ENCODE measurements at regions of chr9 and their contacts with region 1.

Region 1: GRCh38 chr9:96856363-96857286 is 2.3 kb upstream of the ZNF782 start:
- DNase-seq: peak in 1 of 2 experiments; percentile 74
- H3K4me3 ChIP-seq: no peak overlapping the region
- H3K27ac ChIP-seq: no peak overlapping the region
- H3K4me1 ChIP-seq: peaks cover 0 to 16% (median 9%) of the 10 kb centered on the region in 4 experiments; a peak in 5 of 7 replicates
- H3K27me3 ChIP-seq: no peaks in the 10 kb centered on the region; a peak in 1 of 7 replicates
- CTCF ChIP-seq: peak; percentile 81 to 86 (median 84)
- EP300 ChIP-seq: no peak
- POLR2A ChIP-seq: no peak
- RAD21 ChIP-seq: peak; percentile 96

Region 2: GRCh38 chr9:96868709-96869108 is 12.1 kb after region 1 on chr9:
- CTCF ChIA-PET with region 1: interaction called, 93 read pairs
- POLR2A ChIA-PET with region 1: no interaction called
- DNase-seq: no peak
- H3K4me3 ChIP-seq: no peak overlapping the region
- H3K27ac ChIP-seq: no peak overlapping the region
- H3K4me1 ChIP-seq: no peaks in the 10 kb centered on the region
- H3K27me3 ChIP-seq: no peaks in the 10 kb centered on the region
- CTCF ChIP-seq: no peak
- EP300 ChIP-seq: no peak
- POLR2A ChIP-seq: no peak
- RAD21 ChIP-seq: no peak

Region 3: GRCh38 chr9:96875461-96876364 is 19.1 kb after region 1 on chr9:
- CTCF ChIA-PET with region 1: interaction called, 93 read pairs
- POLR2A ChIA-PET with region 1: interaction called, 6 read pairs
- DNase-seq: peak; percentile 91 to 93
- H3K4me3 ChIP-seq: peak overlapping the region; percentile 46 to 68 (median 65)
- H3K27ac ChIP-seq: no peak overlapping the region
- H3K4me1 ChIP-seq: peaks cover 0 to 6% (median 1%) of the 10 kb centered on the region in 4 experiments; a peak in 2 of 7 replicates
- H3K27me3 ChIP-seq: 0 out of 7 replicates have a peak, but pooled peaks cover 0 to 8% (median 2%) of the 10 kb centered on the region in 4 experiments
- CTCF ChIP-seq: peak; percentile 70 to 83 (median 74)
- EP300 ChIP-seq: no peak
- POLR2A ChIP-seq: no peak; a peak in 1 of 3 replicates
- RAD21 ChIP-seq: peak; percentile 43 to 58

Measured in H1 (cell line).